AG04450 (cell line): ENCODE measurements at regions of chr7 and their contacts with region 1.

Region 1: GRCh38 chr7:55065079-55065478 is 46.3 kb downstream of the EGFR start:
- DNase-seq: peak; percentile 93
- H3K4me3 ChIP-seq: no peak overlapping the region
- H3K27ac ChIP-seq: peak overlapping the region; percentile 98
- H3K27me3 ChIP-seq: no peaks in the 10 kb centered on the region
- CTCF ChIP-seq: no peak

Region 2: GRCh38 chr7:55018361-55019190 is 46.5 kb before region 1 on chr7 and contains the start of gene EGFR:
- CTCF ChIA-PET with region 1: interaction called, 4 read pairs
- POLR2A ChIA-PET with region 1: interaction called, 10 read pairs
- DNase-seq: peak; percentile 34
- H3K4me3 ChIP-seq: peak within 1 kb of the TSS; percentile 77
- H3K27ac ChIP-seq: peak within 1 kb of the TSS; percentile 47
- H3K27me3 ChIP-seq: no peaks in the 10 kb centered on the region
- CTCF ChIP-seq: no peak
- polyA plus RNA-seq, gene EGFR: 59.0 and 62.6 TPM in 2 replicates

Region 3: GRCh38 chr7:55078465-55079372 is 13.6 kb after region 1 on chr7:
- CTCF ChIA-PET with region 1: interaction called, 3 read pairs
- POLR2A ChIA-PET with region 1: interaction called, 16 read pairs
- DNase-seq: no peak
- H3K4me3 ChIP-seq: no peak overlapping the region
- H3K27ac ChIP-seq: no peak overlapping the region
- H3K27me3 ChIP-seq: no peaks in the 10 kb centered on the region
- CTCF ChIP-seq: no peak

Region 4: DNA sequence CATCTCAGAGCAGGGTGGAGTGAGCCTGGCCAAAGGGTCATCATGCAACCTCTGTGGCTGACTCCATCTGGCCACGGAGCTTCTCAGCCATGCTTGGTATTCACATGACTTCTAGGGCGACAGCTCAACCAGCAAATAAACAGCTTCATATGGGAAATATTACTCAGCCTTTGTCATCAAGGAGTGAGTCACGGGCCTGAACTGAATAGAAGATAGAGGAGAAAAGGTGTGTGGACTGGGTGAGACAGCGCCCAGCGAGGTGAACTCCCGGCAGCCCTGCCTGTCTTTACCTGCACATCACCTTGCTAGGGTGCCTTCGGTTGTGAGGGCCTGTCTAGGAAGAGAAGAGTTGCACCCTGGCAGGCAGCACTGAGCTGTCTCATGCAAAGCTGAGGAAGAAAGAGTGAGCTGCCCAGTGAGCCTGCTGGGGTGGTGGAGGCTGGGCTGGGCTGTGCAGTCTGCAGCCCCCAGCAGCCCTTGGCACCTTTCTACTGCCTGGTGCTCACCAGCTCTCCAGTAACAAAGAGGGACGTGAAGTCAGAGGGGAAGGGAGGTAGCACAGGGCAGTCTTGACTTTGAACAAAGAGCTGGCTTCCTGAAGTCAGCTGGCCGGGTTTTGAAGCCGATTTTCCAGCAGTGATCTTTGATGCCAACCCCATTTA is 67.9 kb after region 1 on chr7:
- CTCF ChIA-PET with region 1: interaction called, 3 read pairs
- POLR2A ChIA-PET with region 1: interaction called, 25 read pairs
- DNase-seq: peak; percentile 98
- H3K4me3 ChIP-seq: peak overlapping the region; percentile 42
- H3K27ac ChIP-seq: peak overlapping the region; percentile 100
- H3K27me3 ChIP-seq: no peaks in the 10 kb centered on the region
- CTCF ChIP-seq: no peak